Heart left ventricle (tissue), 16 donors: ENCODE measurements at regions of chr12 and their contacts with region 1.

Region 1: DNA sequence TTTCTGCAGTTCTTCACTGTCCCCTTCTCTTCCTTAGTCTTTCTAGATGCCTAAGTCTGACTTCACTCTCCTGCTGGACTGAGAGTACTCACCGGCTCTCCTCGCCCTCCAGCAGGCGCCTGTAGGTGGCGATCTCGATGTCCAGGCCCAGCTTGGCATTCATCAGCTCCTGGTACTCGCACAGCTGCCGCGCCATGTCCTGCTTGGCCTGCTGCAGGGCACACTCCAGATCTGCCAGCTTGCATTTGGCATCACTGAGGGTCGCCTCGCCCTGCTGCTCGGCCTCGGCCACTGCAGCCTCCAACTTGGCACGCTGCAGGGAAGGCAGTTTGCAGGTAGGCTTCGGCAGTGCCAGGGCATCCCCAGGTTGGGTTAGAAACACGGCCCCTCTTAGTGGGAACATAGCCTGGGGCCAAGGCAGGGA is 5.2 kb downstream of the KRT84 start:
- DNase-seq: peak in 1 of 5 donors; percentile 44
- ATAC-seq: peak in 3 of 4 donors; percentile 23 to 51 (median 26)
- H3K4me3 ChIP-seq: no peak overlapping the region
- H3K27ac ChIP-seq: no peak overlapping the region
- H3K4me1 ChIP-seq: no peaks in the 10 kb centered on the region
- H3K27me3 ChIP-seq: peaks cover 0 to 20% (median 0%) of the 10 kb centered on the region in 9 donors
- CTCF ChIP-seq: peak; percentile 7 to 57 (median 32)
- POLR2A ChIP-seq: no peak

Region 2: DNA sequence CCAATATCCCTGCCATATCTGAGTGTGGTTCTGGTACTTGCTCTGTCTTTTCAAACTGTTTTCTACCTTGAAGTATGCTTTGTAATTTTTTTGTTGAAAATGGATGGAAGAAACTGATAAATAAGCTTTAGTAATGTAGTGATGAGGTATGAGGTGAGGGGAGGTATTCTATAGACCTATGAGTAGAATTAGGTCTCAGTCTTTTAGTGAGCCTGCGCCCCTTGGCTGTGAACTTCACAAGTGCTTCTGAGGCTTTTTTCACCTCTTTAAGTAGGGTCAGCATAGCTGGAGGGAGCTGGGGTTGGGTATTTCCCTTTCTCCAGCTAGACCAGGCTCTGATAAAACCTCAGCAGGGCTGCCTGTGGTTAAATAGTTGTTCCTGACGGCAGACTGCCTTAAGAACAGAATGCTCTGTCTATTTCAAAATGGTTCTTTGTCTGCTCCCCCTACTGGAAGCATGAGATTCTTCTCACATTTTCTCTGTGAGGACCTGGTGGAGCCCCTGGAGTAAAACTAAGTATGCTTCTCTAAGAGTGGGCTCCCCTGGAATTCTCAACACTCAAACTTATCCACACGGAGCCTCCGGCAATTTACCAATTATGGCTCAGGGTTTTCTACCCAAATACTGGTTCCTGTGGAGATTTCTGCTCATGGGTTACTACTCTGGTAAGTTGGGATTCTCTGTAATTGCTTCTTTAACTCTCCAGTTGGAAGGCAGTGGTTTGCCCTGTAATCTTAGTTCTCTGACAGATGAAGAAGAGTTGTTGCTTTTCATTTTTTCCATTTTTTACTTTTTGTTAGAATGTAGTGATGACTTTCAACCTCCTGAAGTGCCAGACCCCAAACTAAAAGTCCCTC is 126.8 kb after region 1 on chr12:
- intact Hi-C with region 1: loop called in 2 of 10 experiments (anchors 5 to 10 kb)
- DNase-seq: no peak
- ATAC-seq: peak in 3 of 4 donors; percentile 39 to 69 (median 51)
- H3K4me3 ChIP-seq: no peak overlapping the region
- H3K27ac ChIP-seq: no peak overlapping the region
- H3K4me1 ChIP-seq: peaks cover 0 to 3% (median 0%) of the 10 kb centered on the region in 12 donors
- H3K27me3 ChIP-seq: peaks cover 0 to 29% (median 0%) of the 10 kb centered on the region in 9 donors
- CTCF ChIP-seq: peak; percentile 31 to 63 (median 49)
- POLR2A ChIP-seq: no peak

Region 3: DNA sequence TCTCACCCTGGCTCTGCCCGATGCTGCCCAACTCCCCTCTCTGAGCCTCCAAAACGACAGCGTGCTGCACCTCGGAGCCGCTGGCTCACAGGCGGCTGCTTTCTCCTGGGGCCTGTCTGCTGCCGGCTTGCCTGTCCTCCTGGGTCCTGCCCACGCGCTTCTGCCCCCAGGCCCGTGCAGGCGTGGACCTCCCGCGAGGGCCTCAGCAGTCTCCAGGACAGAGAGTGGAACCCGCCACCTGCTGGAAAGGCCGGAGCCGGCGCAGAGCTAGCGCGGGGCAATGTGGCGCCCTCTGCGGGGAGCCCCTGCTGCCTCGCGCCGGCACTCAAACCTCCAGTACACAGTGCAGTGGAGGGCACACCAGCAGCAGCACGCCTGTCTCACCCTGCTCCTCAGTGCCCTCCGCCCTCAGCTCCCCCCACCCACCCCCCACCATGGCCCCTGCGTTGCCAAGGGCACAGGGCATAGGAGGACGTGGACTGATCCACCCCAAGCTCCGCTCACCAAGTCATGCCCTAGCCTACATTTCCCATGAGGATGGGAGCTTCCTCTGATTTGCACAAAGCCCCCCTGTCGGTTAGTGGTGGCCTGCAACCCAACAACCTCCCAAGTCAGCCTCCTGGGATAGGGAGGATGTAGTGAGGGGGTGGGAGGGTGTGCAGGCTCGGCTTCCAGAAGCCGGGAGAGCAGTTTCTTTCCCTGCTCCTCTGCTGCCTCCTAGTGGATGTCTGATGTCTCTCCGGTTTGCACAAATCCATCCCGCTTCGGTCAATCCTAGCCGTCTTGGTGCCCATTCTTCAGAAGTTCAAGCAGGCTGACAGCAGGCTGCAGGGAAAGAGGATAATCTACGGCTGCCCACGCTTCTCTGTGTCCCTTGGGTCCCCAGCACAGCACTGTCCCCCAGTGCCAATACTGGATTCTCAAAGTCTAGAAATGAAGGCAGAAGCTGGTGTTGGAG is 499.4 kb after region 1 on chr12:
- intact Hi-C with region 1: loop called in 2 of 10 experiments (anchors 5 kb)
- DNase-seq: peak; percentile 76 to 87 (median 82)
- ATAC-seq: peak; percentile 70 to 92 (median 89)
- H3K4me3 ChIP-seq: peak overlapping the region in 9 of 12 donors; percentile 11 to 46 (median 33)
- H3K27ac ChIP-seq: peak overlapping the region in 1 of 12 donors; percentile 42
- H3K4me1 ChIP-seq: peaks cover 0 to 18% (median 8%) of the 10 kb centered on the region in 12 donors
- H3K27me3 ChIP-seq: peaks cover 0 to 17% (median 0%) of the 10 kb centered on the region in 9 donors
- CTCF ChIP-seq: peak; percentile 55 to 77 (median 66)
- POLR2A ChIP-seq: no peak